ENCODE measurements at regions of chr18 and their contacts with region 1.

Region 1: GRCh38 chr18:58077327-58077726 is 33.3 kb downstream of the NEDD4L start:
- DNase-seq: no peak
- H3K4me3 ChIP-seq: no peak overlapping the region
- H3K27ac ChIP-seq: no peak overlapping the region
- H3K27me3 ChIP-seq: peaks cover 25% of the 10 kb centered on the region
- CTCF ChIP-seq: no peak

Region 2: GRCh38 chr18:58135701-58136331 is 58.5 kb after region 1 on chr18:
- CTCF ChIA-PET with region 1: interaction called, 10 read pairs
- POLR2A ChIA-PET with region 1: no interaction called
- DNase-seq: peak; percentile 45
- H3K4me3 ChIP-seq: no peak overlapping the region
- H3K27ac ChIP-seq: no peak overlapping the region
- H3K27me3 ChIP-seq: no peaks in the 10 kb centered on the region
- CTCF ChIP-seq: peak; percentile 90

Measured in AG04450 (cell line).